IMR-90 (cell line): ENCODE measurements at regions of chr1 and their contacts with region 1.

Region 1: DNA sequence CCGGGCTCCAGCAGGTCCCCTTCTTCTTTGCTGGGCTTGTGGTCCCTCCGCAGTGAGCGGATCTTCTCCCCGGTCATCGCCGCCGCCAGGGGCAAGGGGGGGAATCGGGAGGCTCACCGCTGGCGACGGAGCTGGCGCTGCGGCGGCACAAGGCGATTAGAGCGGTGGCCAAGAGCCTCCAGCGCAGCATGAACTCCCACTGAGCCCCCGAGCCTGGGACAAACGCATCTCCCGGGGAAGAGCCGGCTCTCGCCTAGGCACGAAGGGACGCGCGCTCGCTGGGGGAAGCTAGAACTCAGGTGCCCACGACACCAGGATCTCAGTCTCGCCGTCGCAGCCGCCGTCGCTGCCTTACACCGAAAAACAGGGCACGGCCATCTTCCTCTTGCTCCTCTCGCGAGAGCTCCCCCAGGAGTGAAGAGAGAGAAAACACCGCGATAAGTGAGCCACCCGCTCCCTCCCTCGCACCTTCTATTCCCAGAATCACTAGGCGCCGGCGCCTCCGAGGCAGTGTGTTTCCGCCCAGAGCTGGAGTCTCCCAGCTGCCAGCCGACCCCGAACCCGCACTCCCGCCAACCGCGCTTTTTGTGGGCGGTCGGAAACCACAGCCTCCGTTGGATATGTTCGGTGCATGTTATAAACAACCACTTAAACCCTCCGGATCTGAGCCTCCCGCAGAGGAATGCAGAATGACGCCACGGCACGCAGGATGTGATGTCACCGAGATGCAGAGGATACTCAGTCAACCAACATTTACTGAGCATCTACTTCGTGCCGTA is at the start of gene ANKRD13C:
- DNase-seq: peak; percentile 96
- ATAC-seq: peak; percentile 95
- H3K4me3 ChIP-seq: peak within 1 kb of the TSS; percentile 78
- H3K27ac ChIP-seq: peak within 1 kb of the TSS; percentile 88
- H3K4me1 ChIP-seq: no peaks in the 10 kb centered on the region
- H3K27me3 ChIP-seq: no peaks in the 10 kb centered on the region
- CTCF ChIP-seq: 0 out of 2 replicates have a peak, but pooled peaks have one; percentile 6
- POLR2A ChIP-seq: peak; percentile 93
- RAD21 ChIP-seq: 0 out of 2 replicates have a peak, but pooled peaks have one; percentile 4
- total RNA-seq, gene ANKRD13C: 10.9 and 18.9 TPM in 2 replicates

Region 2: DNA sequence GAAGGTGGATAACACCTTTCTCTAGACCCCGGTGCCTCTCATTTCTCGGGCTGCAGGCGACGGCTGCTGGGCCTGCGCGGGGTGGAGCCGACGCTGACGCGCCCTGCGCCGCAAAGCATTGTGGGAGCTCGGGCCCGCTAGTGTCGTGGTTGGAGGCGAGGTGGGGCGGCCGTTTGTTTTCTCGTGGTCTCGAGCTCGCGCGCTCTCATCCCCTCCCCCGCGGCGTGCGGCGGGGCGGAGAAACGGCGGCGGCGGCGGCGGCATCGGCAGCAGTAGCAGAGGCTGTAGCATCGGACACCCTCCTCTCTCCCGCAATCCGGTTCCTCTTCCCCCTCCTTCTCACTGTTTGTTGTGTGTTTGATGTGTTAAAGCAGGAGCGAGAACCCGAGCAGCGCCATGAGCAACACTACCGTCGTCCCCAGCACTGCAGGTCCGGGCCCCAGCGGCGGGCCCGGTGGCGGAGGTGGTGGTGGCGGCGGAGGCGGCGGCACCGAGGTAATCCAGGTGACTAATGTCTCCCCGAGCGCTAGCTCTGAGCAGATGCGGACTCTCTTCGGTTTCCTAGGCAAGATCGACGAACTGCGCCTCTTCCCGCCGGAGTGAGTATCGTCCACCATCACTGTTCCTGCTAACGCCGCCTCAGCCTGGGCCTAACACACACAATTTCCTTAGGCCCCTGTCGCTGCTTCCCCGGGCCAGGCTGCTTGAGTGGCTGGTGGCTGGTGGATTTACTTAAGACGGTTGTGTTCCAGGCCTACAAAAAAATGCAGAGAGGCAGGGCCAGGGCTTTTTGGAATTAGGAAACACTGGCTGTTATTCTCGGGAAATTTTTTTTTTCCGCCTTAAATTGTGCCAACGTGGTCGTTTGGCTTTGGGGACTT is 133.0 kb before region 1 on chr1 and contains the start of gene SRSF11:
- CTCF ChIA-PET with region 1: no interaction called
- POLR2A ChIA-PET with region 1: no interaction called
- dilution Hi-C with region 1: no loop called
- in situ Hi-C with region 1: no loop called
- intact Hi-C with region 1: loop called (anchors 5 kb)
- DNase-seq: peak; percentile 91
- ATAC-seq: peak; percentile 99
- H3K4me3 ChIP-seq: peak within 1 kb of the TSS; percentile 97
- H3K27ac ChIP-seq: peak within 1 kb of the TSS; percentile 98
- H3K4me1 ChIP-seq: peaks cover 2% of the 10 kb centered on the region
- H3K27me3 ChIP-seq: no peaks in the 10 kb centered on the region
- CTCF ChIP-seq: no peak
- POLR2A ChIP-seq: peak; percentile 76
- RAD21 ChIP-seq: no peak
- total RNA-seq, gene SRSF11: 94.5 and 116 TPM in 2 replicates

Region 3: DNA sequence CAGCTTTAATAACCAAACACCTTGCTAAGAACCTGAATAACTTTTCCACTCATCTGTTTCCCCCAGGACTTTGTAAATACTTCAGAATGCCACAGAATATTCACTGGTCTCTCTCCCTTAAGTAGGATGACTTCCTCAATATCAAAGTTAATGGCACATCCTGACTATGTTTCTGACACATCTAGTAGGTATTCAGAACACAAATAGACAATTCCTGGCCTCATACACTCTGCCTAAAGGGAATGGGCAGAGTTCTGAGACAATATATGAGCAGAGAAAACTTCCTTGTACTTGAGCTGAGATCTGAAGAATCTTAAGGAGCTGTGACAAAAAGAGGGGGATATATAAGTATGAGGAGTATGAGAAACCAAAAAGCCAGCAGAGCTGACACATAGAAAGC is 34.8 kb before region 1 on chr1:
- CTCF ChIA-PET with region 1: no interaction called
- POLR2A ChIA-PET with region 1: no interaction called
- dilution Hi-C with region 1: no loop called
- in situ Hi-C with region 1: no loop called
- intact Hi-C with region 1: loop called (anchors 5 kb)
- DNase-seq: peak; percentile 87
- ATAC-seq: peak; percentile 94
- H3K4me3 ChIP-seq: no peak overlapping the region
- H3K27ac ChIP-seq: peak overlapping the region; percentile 70; the same call in 1 of the 2 replicates
- H3K4me1 ChIP-seq: peaks cover 4% of the 10 kb centered on the region; the same call in 1 of the 2 replicates
- H3K27me3 ChIP-seq: no peaks in the 10 kb centered on the region
- CTCF ChIP-seq: no peak
- POLR2A ChIP-seq: no peak
- RAD21 ChIP-seq: no peak